A549 (cell line): ENCODE measurements at regions of chr1 and their contacts with region 1.

Region 1: GRCh38 chr1:6245086-6245868 is 1.3 kb downstream of the HES3 start:
- DNase-seq: peak; percentile 68 to 78
- ATAC-seq: peak; percentile 67 to 79
- H3K4me3 ChIP-seq: peak overlapping the region; percentile 40
- H3K27ac ChIP-seq: no peak overlapping the region
- H3K4me1 ChIP-seq: peaks cover 6% of the 10 kb centered on the region; the same call in 2 of the 3 replicates
- CTCF ChIP-seq: peak; percentile 55
- EP300 ChIP-seq: no peak
- POLR2A ChIP-seq: no peak
- RAD21 ChIP-seq: peak; percentile 24 to 53

Region 2: DNA sequence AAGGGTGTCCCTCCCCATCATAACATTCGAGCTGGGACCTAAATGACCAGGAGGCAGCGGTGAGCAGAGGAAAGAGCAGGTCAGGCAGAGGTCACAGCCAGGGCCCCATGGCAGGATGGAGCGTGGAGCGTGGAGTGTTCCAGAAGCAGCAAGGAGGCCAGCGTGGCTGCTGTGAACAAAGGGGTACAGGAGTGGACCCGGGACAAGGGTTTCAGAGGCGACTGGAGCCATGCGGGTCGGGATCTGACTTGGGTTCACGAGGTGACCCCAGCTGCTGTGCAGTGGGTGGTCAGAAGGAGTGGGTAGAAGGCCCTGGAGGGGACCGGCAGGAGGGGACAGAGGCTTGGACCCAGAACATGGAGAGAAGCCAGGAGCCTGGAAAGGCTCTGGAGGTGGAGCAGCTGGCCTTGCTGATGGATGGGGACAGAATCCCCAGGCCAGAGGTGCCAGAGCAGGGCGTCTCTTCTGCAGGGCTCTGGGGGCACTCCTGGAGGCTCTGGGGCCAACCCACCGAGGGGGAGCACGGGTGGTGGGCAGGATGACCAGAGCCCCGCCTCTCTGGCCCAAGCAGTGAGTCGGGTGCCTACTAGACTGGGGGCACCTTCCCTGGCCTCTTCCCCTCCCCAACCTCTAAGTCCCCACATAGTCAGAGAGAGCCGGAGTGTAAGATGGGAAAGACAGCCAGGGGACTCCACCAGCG is 67.4 kb before region 1 on chr1:
- CTCF ChIA-PET with region 1: no interaction called
- POLR2A ChIA-PET with region 1: no interaction called
- DNase-seq: no peak
- ATAC-seq: no peak
- H3K4me3 ChIP-seq: no peak overlapping the region
- H3K27ac ChIP-seq: no peak overlapping the region
- H3K4me1 ChIP-seq: peaks cover 6% of the 10 kb centered on the region; the same call in 2 of the 3 replicates
- CTCF ChIP-seq: no peak
- EP300 ChIP-seq: no peak
- POLR2A ChIP-seq: no peak
- RAD21 ChIP-seq: no peak

Region 3: DNA sequence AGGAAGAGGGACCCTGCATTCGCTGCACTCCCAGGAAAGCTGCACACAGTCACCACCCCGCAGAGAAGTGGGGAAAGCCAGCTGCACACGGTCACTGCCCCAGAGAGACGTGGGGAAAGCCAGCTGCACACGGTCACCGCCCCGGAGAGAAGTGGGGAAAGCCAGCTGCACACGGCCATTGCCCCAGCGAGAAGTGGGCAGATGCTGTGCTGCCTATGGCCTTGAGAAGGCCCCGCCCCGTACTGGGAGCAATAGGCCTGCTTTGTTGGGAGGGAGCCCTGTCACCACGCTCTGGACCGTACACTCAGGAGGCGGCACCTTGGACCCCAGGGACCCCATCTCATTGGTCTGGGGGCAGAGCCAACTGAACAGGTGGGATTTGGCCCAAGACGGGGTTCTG is 19.9 kb after region 1 on chr1:
- CTCF ChIA-PET with region 1: interaction called, 64 read pairs
- POLR2A ChIA-PET with region 1: no interaction called
- DNase-seq: no peak
- ATAC-seq: no peak
- H3K4me3 ChIP-seq: no peak overlapping the region
- H3K27ac ChIP-seq: no peak overlapping the region
- H3K4me1 ChIP-seq: peaks cover 1% of the 10 kb centered on the region; the same call in 1 of the 3 replicates
- CTCF ChIP-seq: no peak
- EP300 ChIP-seq: no peak
- POLR2A ChIP-seq: no peak
- RAD21 ChIP-seq: no peak

Region 4: DNA sequence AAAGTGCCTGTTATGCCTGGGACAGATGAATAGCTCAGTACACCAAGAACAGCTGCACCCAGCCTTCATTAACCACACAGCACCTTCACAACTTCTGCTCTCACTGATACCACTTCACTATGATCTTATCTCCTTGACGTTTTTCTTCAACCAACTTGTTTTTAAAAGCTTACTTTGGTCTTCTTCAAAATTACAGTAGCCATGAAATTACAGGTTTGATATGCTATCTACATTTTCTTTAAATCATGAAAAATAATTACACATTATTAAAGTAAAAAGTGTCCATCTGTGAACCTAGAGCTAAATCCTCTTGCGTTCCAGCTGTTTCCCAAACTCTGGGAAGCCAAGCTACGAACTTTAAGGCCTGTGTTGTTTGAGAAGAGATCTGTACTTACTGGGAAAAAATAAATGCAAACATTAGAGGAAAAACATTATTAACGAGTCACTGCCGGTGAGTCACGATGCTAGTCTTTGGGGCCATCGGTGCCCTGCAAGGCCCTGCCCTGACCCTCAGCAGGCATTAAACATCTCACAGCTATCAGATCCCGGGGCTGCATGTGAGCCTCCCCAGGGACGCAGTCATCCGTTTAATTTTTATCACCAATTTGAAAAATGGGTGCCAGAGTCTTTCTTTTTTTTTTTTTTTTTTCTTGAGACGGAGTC is 72.0 kb after region 1 on chr1:
- CTCF ChIA-PET with region 1: interaction called, 26 read pairs
- POLR2A ChIA-PET with region 1: no interaction called
- DNase-seq: no peak
- ATAC-seq: no peak
- H3K4me3 ChIP-seq: no peak overlapping the region
- H3K27ac ChIP-seq: no peak overlapping the region
- H3K4me1 ChIP-seq: no peaks in the 10 kb centered on the region
- CTCF ChIP-seq: no peak
- EP300 ChIP-seq: no peak
- POLR2A ChIP-seq: no peak
- RAD21 ChIP-seq: no peak

Region 5: GRCh38 chr1:6359216-6360116 is 114.2 kb after region 1 on chr1:
- CTCF ChIA-PET with region 1: interaction called, 23 read pairs
- POLR2A ChIA-PET with region 1: no interaction called
- DNase-seq: peak in 1 of 2 experiments; percentile 48
- ATAC-seq: peak; percentile 68 to 70
- H3K4me3 ChIP-seq: no peak overlapping the region
- H3K27ac ChIP-seq: peak overlapping the region; percentile 58 to 82
- H3K4me1 ChIP-seq: peaks cover 29% of the 10 kb centered on the region
- CTCF ChIP-seq: no peak
- EP300 ChIP-seq: no peak
- POLR2A ChIP-seq: no peak
- RAD21 ChIP-seq: no peak

Region 6: GRCh38 chr1:6401673-6402072 is 156.4 kb after region 1 on chr1:
- CTCF ChIA-PET with region 1: interaction called, 62 read pairs
- POLR2A ChIA-PET with region 1: no interaction called
- DNase-seq: no peak
- ATAC-seq: no peak
- H3K4me3 ChIP-seq: no peak overlapping the region
- H3K27ac ChIP-seq: no peak overlapping the region
- H3K4me1 ChIP-seq: no peaks in the 10 kb centered on the region
- CTCF ChIP-seq: no peak
- EP300 ChIP-seq: no peak
- POLR2A ChIP-seq: no peak
- RAD21 ChIP-seq: no peak

Region 7: GRCh38 chr1:6423321-6423999 is 178.2 kb after region 1 on chr1:
- CTCF ChIA-PET with region 1: interaction called, 10 read pairs
- POLR2A ChIA-PET with region 1: no interaction called
- DNase-seq: peak in 1 of 2 experiments; percentile 52
- ATAC-seq: peak; percentile 60 to 78
- H3K4me3 ChIP-seq: peak overlapping the region; percentile 35; the same call in 2 of the 3 replicates
- H3K27ac ChIP-seq: peak overlapping the region in 1 of 2 experiments; percentile 38; a peak in 1 of 6 replicates
- H3K4me1 ChIP-seq: peaks cover 19% of the 10 kb centered on the region
- CTCF ChIP-seq: peak; percentile 54
- EP300 ChIP-seq: no peak
- POLR2A ChIP-seq: no peak
- RAD21 ChIP-seq: peak in 1 of 2 experiments; percentile 21; a peak in 2 of 5 replicates

Region 8: GRCh38 chr1:6475381-6476133 is 230.3 kb after region 1 on chr1:
- CTCF ChIA-PET with region 1: interaction called, 10 read pairs
- POLR2A ChIA-PET with region 1: no interaction called
- DNase-seq: peak in 1 of 2 experiments; percentile 73
- ATAC-seq: peak; percentile 82 to 93
- H3K4me3 ChIP-seq: no peak overlapping the region
- H3K27ac ChIP-seq: no peak overlapping the region
- H3K4me1 ChIP-seq: peaks cover 7% of the 10 kb centered on the region; the same call in 1 of the 3 replicates
- CTCF ChIP-seq: peak; percentile 72
- EP300 ChIP-seq: no peak
- POLR2A ChIP-seq: no peak
- RAD21 ChIP-seq: peak; percentile 30 to 35; a peak in 2 of 5 replicates